AG04449 (cell line): ENCODE measurements at regions of chr20 and their contacts with region 1.

Region 1: DNA sequence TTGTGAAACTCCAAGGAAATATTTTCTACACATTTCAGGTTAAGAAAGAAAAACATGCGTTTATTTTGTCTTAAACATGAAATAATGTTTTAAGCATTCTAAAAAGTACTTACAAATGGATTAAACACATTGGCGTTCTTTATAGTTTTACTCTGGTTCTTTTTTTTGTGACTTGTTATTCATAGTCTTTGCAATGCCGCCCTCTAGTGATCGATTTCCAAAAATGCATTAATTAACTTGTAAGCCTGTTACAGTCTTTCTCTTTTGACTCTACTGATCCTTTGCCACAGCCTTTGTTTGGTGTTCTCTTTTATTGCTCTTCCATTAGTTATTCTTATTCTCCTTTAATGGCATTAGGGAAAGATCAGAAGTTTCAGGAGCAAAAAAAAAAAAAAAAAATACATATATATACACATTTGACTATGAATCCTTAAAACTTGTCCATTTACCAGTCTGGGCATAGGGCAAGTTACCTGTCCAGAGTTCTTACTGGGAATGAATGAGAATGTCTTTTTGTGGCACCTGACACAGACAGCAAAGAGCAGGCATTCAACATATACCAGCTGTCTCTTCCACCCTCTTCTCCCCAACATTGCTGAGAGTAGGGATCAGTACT is 59.9 kb downstream of the MACROD2 start:
- DNase-seq: peak; percentile 37
- H3K4me3 ChIP-seq: no peak overlapping the region
- CTCF ChIP-seq: peak; percentile 40

Region 2: GRCh38 chr20:13384132-13384531 is 671.1 kb before region 1 on chr20:
- CTCF ChIA-PET with region 1: no interaction called
- POLR2A ChIA-PET with region 1: no interaction called
- DNase-seq: no peak
- H3K4me3 ChIP-seq: no peak overlapping the region
- CTCF ChIP-seq: no peak

Region 3: GRCh38 chr20:13809373-13809772 is 245.9 kb before region 1 on chr20:
- CTCF ChIA-PET with region 1: interaction called, 12 read pairs
- POLR2A ChIA-PET with region 1: no interaction called
- DNase-seq: no peak
- H3K4me3 ChIP-seq: no peak overlapping the region
- CTCF ChIP-seq: no peak

Region 4: GRCh38 chr20:14093652-14094051 is 38.4 kb after region 1 on chr20:
- CTCF ChIA-PET with region 1: no interaction called
- POLR2A ChIA-PET with region 1: no interaction called
- DNase-seq: no peak
- H3K4me3 ChIP-seq: no peak overlapping the region
- CTCF ChIP-seq: no peak